BJ (cell line): ENCODE measurements at regions of chr19 and their contacts with region 1.

Region 1: DNA sequence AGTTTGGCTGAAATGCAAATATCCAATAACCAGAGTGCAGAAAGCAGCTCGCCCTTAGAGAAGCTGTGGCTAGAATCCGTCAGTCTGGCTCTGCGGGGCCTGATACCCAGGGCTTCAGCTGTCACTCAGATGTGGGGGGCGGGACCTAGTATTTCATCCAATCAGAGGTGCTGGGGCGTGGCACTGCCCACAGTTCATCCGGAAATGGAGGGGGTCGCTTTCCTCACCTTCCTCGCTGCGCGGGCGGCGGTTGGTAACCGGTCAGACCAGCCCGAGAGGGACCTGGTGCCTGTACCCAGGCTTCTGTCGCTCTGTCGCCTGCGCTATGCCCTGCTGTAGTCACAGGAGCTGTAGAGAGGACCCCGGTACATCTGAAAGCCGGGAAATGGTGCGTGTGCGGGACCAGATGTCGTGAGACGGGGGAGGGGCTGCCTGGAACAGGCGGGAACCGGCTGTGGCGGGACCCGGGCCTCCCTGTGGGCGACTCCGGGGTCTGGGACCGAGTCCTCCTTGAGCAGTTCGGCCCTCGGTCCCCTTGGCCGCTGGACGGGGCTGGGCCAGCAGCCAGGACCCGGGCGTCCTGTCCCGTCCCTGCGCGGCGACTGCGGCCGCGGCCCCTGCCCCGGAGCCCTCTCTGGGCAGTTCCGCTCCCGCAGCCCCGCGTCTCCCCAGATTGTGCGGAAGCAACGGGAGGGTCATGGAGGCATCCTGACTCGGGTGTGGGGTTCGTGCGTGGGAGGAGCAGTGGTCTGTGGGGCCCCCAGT is at the start of gene ZNF700:
- DNase-seq: peak; percentile 42
- H3K4me3 ChIP-seq: peak within 1 kb of the TSS; percentile 90
- H3K27me3 ChIP-seq: no peaks in the 10 kb centered on the region
- CTCF ChIP-seq: no peak
- polyA plus RNA-seq, gene ZNF700: 2.5 and 4.8 TPM in 2 replicates

Region 2: GRCh38 chr19:11798391-11799330 is 126.4 kb before region 1 on chr19 and contains the start of gene ZNF491:
- CTCF ChIA-PET with region 1: interaction called, 17 read pairs
- POLR2A ChIA-PET with region 1: no interaction called
- DNase-seq: peak; percentile 49
- H3K4me3 ChIP-seq: peak within 1 kb of the TSS; percentile 68
- H3K27me3 ChIP-seq: no peaks in the 10 kb centered on the region
- CTCF ChIP-seq: peak; percentile 19; the same call in 1 of the 2 replicates
- polyA plus RNA-seq, gene ZNF491: 0.67 and 1.3 TPM in 2 replicates

Region 3: GRCh38 chr19:11848594-11849469 is 76.2 kb before region 1 on chr19 and contains the start of gene ZNF439:
- CTCF ChIA-PET with region 1: no interaction called
- POLR2A ChIA-PET with region 1: no interaction called
- DNase-seq: peak; percentile 33
- H3K4me3 ChIP-seq: peak within 1 kb of the TSS; percentile 56
- H3K27me3 ChIP-seq: no peaks in the 10 kb centered on the region
- CTCF ChIP-seq: no peak
- polyA plus RNA-seq, gene ZNF439: 3.0 and 5.1 TPM in 2 replicates

Region 4: GRCh38 chr19:11881151-11881800 is 43.8 kb before region 1 on chr19:
- CTCF ChIA-PET with region 1: interaction called, 15 read pairs
- POLR2A ChIA-PET with region 1: no interaction called
- DNase-seq: no peak
- H3K4me3 ChIP-seq: no peak overlapping the region
- H3K27me3 ChIP-seq: no peaks in the 10 kb centered on the region; the same call in 1 of the 2 replicates
- CTCF ChIP-seq: peak; percentile 77

Region 5: DNA sequence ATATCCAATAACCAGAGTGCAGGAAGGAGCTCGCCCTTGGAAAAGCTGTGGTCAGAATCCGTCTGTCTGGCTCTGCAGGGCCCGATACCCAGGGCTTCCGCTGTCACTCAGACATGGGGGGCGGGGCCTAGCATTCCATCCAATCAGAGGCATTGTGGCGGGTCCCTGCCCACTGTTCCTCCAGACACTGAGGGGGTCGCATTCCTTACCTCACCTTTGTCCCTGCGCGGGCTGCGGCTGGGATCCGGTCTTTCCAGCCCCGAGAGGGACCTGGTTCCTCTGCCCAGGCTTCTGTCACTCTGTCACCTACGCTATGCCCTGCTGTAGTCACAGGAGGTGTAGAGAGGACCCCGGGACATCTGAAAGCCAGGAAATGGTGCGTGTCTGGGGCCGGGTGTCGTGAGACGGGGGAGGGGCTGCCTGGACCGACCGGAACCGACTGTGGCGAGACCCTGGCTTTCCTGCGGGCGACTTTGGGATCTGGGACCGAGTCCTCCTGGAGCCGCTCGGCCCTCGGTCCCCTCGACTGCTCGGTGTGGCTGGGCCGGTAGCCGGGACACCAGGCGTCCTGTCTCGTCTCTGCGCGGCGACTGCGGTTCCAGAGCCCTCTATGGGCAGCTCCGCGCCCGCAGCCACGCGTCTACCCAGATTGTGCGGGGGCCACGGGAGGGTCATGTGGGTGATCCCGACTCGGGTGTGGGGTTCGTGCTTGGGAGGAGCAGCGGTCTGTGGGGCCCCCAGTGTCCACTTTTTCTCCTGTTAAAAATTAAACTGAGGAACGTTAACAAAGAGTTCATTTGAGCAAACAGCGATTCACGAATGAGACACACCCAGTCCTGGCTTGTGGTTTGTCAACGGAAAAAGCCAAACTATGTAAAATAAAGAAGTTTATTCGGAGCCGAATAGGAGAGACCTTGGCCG is 37.2 kb before region 1 on chr19 and contains the start of gene ZNF69:
- CTCF ChIA-PET with region 1: interaction called, 15 read pairs
- POLR2A ChIA-PET with region 1: no interaction called
- DNase-seq: peak; percentile 26
- H3K4me3 ChIP-seq: peak within 1 kb of the TSS; percentile 79
- H3K27me3 ChIP-seq: no peaks in the 10 kb centered on the region; the same call in 1 of the 2 replicates
- CTCF ChIP-seq: peak; percentile 52
- polyA plus RNA-seq, gene ZNF69: 3.4 and 3.9 TPM in 2 replicates

Region 6: GRCh38 chr19:11942843-11943108 is 17.7 kb after region 1 on chr19:
- CTCF ChIA-PET with region 1: interaction called, 15 read pairs
- POLR2A ChIA-PET with region 1: no interaction called
- DNase-seq: no peak
- H3K4me3 ChIP-seq: no peak overlapping the region
- H3K27me3 ChIP-seq: no peaks in the 10 kb centered on the region
- CTCF ChIP-seq: no peak

Region 7: DNA sequence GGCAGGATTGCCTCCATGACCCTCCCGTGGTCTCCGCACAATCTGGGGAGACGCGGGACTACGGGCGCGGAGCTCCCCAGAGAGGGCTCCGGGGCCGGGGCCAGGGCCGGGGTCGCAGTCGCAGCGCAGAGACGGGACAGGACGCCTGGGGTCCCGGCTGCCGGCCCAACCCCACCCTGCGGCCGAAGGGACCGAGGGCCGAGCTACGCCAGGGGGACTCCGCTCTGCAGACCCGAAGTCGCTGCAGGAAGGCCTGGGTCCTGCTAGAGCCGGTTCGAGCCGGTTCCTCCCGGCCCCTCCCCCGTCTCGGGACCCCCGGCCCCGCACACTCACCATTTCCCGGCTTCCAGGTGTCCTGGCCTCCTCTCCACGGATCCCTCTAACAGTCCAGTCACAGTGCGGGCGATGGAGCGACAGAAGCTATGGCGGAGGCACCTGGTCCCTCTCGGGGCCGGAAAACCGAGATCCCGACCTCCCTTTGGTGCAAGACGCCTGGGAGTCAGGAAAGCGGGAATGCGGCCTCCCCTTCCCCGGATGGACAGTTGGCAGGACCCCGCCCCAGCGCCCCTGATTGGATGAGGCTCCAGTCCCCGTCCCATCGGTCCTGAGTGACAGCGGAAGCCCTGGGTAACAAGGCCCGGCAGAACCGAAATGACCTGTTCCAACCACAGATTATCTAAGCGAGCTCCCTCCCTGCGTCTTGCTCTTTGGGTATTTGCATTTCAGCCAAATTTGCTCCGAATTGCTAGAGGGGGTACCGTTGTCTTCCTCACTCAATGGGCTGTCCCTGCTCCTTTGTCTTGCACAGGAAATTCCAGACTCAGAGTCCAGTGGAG is 231.4 kb after region 1 on chr19 and contains the start of gene ZNF625:
- CTCF ChIA-PET with region 1: no interaction called
- POLR2A ChIA-PET with region 1: no interaction called
- DNase-seq: peak; percentile 51
- H3K4me3 ChIP-seq: peak within 1 kb of the TSS; percentile 67
- H3K27me3 ChIP-seq: no peaks in the 10 kb centered on the region
- CTCF ChIP-seq: no peak
- polyA plus RNA-seq, gene ZNF625: 1.5 and 2.2 TPM in 2 replicates